ENCODE measurements at regions of chr11 and their contacts with region 1.

Region 1: GRCh38 chr11:74696932-74697687 is 34.1 kb downstream of the CHRDL2 start:
- DNase-seq: peak; percentile 83 to 87
- ATAC-seq: peak; percentile 89 to 97 (median 94)
- H3K4me3 ChIP-seq: peak overlapping the region in 6 of 10 donors; percentile 7 to 30 (median 22)
- H3K27ac ChIP-seq: peak overlapping the region; percentile 52 to 92 (median 84)
- H3K4me1 ChIP-seq: peaks cover 6 to 22% (median 20%) of the 10 kb centered on the region in 9 donors
- H3K27me3 ChIP-seq: no peaks in the 10 kb centered on the region
- CTCF ChIP-seq: no peak

Region 2: GRCh38 chr11:74650498-74650897 is 46.6 kb before region 1 on chr11:
- intact Hi-C with region 1: no loop called
- DNase-seq: no peak
- ATAC-seq: peak in 5 of 8 donors; percentile 29 to 94 (median 52)
- H3K4me3 ChIP-seq: no peak overlapping the region
- H3K27ac ChIP-seq: no peak overlapping the region
- H3K4me1 ChIP-seq: no peaks in the 10 kb centered on the region
- H3K27me3 ChIP-seq: no peaks in the 10 kb centered on the region
- CTCF ChIP-seq: no peak

Region 3: DNA sequence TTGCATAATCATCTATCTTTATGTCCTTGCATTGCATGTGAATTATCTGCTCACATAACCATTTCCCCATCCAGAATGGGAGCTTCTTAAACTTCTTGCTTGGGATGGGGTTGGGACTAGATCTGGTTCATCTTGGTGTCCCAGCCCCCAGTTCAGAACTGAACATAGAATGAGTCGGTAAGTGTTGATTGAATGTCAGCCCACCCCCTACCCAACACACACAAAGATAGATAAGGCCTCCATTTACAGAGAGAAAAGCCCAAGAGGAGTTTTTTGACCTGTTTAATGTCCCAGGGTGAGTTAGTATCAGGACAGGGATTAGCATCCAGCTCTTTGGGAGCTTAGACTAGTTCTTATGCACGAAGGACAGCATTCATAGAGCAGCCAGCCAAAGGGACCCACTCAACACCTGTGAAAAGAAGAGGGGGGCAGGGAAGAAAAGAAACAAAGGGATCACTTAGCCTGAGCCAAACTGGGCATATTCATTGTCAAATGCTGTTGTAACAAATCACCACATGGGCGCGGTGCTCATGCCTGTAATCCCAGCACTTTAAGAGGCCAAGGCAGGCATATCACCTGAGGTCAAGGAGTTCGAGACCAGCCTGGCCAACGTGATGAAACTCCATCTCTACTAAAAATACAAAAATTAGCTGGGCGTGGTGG is 23.3 kb before region 1 on chr11:
- intact Hi-C with region 1: loop called in 1 of 10 experiments (anchors 2 kb)
- DNase-seq: no peak
- ATAC-seq: no peak
- H3K4me3 ChIP-seq: no peak overlapping the region
- H3K27ac ChIP-seq: peak overlapping the region in 8 of 10 donors; percentile 28 to 87 (median 77)
- H3K4me1 ChIP-seq: peaks cover 4 to 26% (median 15%) of the 10 kb centered on the region in 9 donors
- H3K27me3 ChIP-seq: no peaks in the 10 kb centered on the region
- CTCF ChIP-seq: no peak

Measured in heart right ventricle (tissue), 16 donors.